ENCODE measurements at regions of chrX and their contacts with region 1.

Region 1: GRCh38 chrX:138858438-138858837 is 146.9 kb upstream of the FGF13 start:
- DNase-seq: peak; percentile 83
- H3K4me3 ChIP-seq: no peak overlapping the region
- H3K27ac ChIP-seq: peak overlapping the region; percentile 26
- H3K4me1 ChIP-seq: peaks cover 15% of the 10 kb centered on the region
- H3K27me3 ChIP-seq: no peaks in the 10 kb centered on the region
- CTCF ChIP-seq: no peak

Region 2: GRCh38 chrX:138925330-138925729 is 66.9 kb after region 1 on chrX:
- CTCF ChIA-PET with region 1: no interaction called
- dilution Hi-C with region 1: no loop called
- in situ Hi-C with region 1: no loop called
- intact Hi-C with region 1: loop called (anchors 5 kb)
- DNase-seq: peak; percentile 81
- H3K4me3 ChIP-seq: no peak overlapping the region
- H3K27ac ChIP-seq: no peak overlapping the region
- H3K4me1 ChIP-seq: peaks cover 12% of the 10 kb centered on the region
- H3K27me3 ChIP-seq: no peaks in the 10 kb centered on the region
- CTCF ChIP-seq: no peak

Region 3: GRCh38 chrX:139077281-139078250 is 219.1 kb after region 1 on chrX:
- CTCF ChIA-PET with region 1: no interaction called
- dilution Hi-C with region 1: no loop called
- in situ Hi-C with region 1: no loop called
- intact Hi-C with region 1: loop called (anchors 2 kb)
- DNase-seq: peak; percentile 70
- H3K4me3 ChIP-seq: no peak overlapping the region
- H3K27ac ChIP-seq: peak overlapping the region; percentile 43
- H3K4me1 ChIP-seq: no peaks in the 10 kb centered on the region
- H3K27me3 ChIP-seq: no peaks in the 10 kb centered on the region
- CTCF ChIP-seq: no peak

Region 4: GRCh38 chrX:139204898-139205667 is 346.6 kb after region 1 on chrX:
- CTCF ChIA-PET with region 1: no interaction called
- dilution Hi-C with region 1: no loop called
- in situ Hi-C with region 1: no loop called
- intact Hi-C with region 1: loop called (anchors 10 kb)
- DNase-seq: peak; percentile 4
- H3K4me3 ChIP-seq: peak overlapping the region; percentile 37 to 43 (median 38)
- H3K27ac ChIP-seq: no peak overlapping the region
- H3K4me1 ChIP-seq: no peaks in the 10 kb centered on the region
- H3K27me3 ChIP-seq: peaks cover 2% of the 10 kb centered on the region
- CTCF ChIP-seq: peak in 1 of 2 donors; percentile 3

Measured in mammary epithelial cell (primary cell).